PC-3 (cell line): ENCODE measurements at regions of chr3 and their contacts with region 1.

Region 1: GRCh38 chr3:48635222-48636021 is at the start of gene SLC26A6:
- DNase-seq: peak; percentile 98
- ATAC-seq: peak; percentile 95
- H3K4me3 ChIP-seq: peak within 1 kb of the TSS; percentile 90
- H3K27ac ChIP-seq: no peak within 1 kb of the TSS; the same call in 1 of the 2 replicates
- H3K4me1 ChIP-seq: peaks cover 26% of the 10 kb centered on the region
- H3K27me3 ChIP-seq: no peaks in the 10 kb centered on the region
- CTCF ChIP-seq: peak; percentile 74
- total RNA-seq, gene SLC26A6: 38.1 and 44.9 TPM in 2 replicates

Region 2: DNA sequence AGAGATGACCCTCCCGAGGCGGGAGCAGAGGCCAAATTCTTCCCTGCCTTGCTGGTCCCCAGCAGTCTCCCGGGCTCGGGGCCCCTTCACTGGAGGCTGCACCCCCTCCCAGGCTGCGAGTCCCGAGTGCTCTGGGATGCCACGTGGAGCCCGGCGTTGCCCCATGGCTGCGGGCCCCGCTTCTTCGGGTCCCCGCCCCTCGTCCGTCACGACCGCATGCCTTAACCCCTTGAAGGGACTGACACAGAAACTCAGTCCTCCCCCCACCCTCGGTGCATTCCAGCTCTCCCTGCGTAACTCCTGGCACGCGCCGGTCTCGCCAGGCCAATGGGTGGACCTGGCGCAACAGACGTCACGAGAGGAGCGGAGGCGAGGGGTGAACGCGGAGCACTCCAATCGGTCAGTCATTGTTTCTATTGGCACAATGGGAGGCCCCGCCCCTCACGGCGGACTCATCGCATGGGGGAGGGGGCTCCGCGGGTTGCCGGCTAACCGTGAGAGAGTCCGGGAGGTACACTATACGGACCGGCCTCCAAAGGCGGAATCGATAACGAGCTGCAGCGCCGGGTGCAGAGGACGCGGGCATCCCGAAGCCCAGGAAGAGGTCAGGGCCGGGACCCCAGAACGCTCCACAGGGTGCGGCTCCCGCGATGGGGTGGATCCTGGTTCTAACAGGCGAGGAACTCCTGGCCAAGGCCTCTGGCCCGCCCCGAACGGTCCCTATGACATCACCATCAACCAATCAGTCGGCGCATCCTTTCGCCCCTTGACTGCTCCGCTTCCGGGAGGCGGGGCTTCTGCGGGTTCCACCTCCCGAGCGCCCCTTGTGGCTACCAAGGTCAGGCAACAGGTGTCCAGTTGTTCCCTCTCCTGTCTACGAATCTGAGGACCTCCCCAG is 28.2 kb after region 1 on chr3:
- CTCF ChIA-PET with region 1: interaction called, 5 read pairs
- POLR2A ChIA-PET with region 1: no interaction called
- intact Hi-C with region 1: loop called (anchors 1 kb)
- DNase-seq: peak; percentile 98
- ATAC-seq: peak; percentile 88
- H3K4me3 ChIP-seq: peak overlapping the region; percentile 66
- H3K27ac ChIP-seq: peak overlapping the region; percentile 76
- H3K4me1 ChIP-seq: peaks cover 9% of the 10 kb centered on the region
- H3K27me3 ChIP-seq: no peaks in the 10 kb centered on the region
- CTCF ChIP-seq: peak; percentile 85

Region 3: DNA sequence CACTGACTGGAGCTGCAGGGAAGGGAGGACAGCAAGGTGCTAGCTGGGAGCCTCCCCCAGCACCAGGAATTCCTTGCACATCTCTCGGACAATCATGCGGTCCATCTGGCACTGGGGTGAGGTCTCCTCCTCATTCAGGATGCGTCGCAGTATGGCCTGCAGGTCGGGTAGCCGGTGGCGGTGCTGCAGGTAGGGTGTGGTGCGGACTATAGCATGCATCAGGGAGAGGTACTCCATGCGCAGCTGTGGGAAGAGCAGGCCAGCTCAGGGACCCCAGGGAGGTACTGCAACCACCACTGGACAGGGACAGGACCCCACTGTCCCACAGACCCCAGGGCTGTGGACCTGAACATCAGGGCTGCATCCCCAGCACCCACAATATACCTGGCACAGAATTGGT is 39.1 kb after region 1 on chr3:
- CTCF ChIA-PET with region 1: interaction called, 12 read pairs
- POLR2A ChIA-PET with region 1: no interaction called
- intact Hi-C with region 1: no loop called
- DNase-seq: no peak
- ATAC-seq: no peak
- H3K4me3 ChIP-seq: no peak overlapping the region
- H3K27ac ChIP-seq: no peak overlapping the region
- H3K4me1 ChIP-seq: no peaks in the 10 kb centered on the region
- H3K27me3 ChIP-seq: no peaks in the 10 kb centered on the region
- CTCF ChIP-seq: no peak